ENCODE measurements at regions of chr7 and their contacts with region 1.

Region 1: GRCh38 chr7:98266840-98267239 is 14.6 kb upstream of the BRI3 start:
- DNase-seq: no peak
- H3K4me3 ChIP-seq: no peak overlapping the region
- H3K4me3 Mint-ChIP-seq: no peak overlapping the region
- H3K27ac Mint-ChIP-seq: no peak overlapping the region
- H3K4me1 ChIP-seq: peaks cover 17% of the 10 kb centered on the region
- H3K4me1 Mint-ChIP-seq: peaks cover 15% of the 10 kb centered on the region
- H3K27me3 ChIP-seq: no peaks in the 10 kb centered on the region
- H3K27me3 Mint-ChIP-seq: no peaks in the 10 kb centered on the region
- CTCF ChIP-seq: peak; percentile 37 to 52

Region 2: DNA sequence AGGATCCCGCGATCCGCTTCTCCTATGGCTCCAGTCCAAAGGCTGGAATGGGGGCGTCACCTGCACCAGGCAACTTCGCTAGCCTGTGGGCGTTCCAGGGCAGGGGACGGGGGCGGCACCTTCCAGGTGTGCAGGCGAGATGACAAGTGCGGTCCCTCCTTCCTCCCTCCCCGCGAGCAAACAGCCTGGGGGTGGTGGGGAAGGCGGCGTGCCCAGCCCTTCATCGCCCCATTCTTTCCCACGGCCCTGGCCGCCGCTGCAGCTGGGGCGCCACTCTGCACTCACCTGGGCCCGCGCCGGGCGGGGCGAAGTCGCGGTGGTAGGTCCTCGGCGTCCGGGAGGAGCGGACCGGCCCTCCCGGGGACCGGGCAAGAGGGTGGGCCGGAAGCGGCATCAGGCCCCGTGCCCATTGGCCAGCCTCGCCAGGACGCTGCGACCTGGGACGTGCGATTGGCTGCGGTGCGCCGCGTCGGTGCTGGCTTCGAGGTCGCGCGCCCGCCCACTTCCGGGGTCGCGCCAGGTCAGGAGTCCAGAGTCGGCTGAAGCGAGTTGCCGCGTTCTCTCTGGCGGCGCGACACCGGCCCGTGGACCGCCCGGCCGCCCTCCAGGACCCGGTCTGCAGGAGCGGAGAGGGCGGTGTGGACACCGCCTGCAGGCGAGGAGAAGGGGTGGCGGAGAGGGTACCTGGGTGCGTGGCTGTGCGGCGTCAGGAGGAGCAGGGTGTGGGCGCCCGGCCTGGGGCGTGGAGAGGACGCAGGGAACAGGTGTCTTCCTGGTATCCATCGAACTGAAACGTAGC is 14.8 kb before region 1 on chr7 and contains the start of gene TECPR1:
- CTCF ChIA-PET with region 1: interaction called, 10 read pairs
- POLR2A ChIA-PET with region 1: no interaction called
- intact Hi-C with region 1: no loop called
- DNase-seq: peak; percentile 96 to 98
- H3K4me3 ChIP-seq: peak within 1 kb of the TSS; percentile 68
- H3K4me3 Mint-ChIP-seq: peak within 1 kb of the TSS; percentile 91
- H3K27ac Mint-ChIP-seq: peak within 1 kb of the TSS; percentile 85
- H3K4me1 ChIP-seq: peaks cover 8% of the 10 kb centered on the region; the same call in 1 of the 2 replicates
- H3K4me1 Mint-ChIP-seq: peaks cover 9% of the 10 kb centered on the region
- H3K27me3 ChIP-seq: no peaks in the 10 kb centered on the region
- H3K27me3 Mint-ChIP-seq: no peaks in the 10 kb centered on the region
- CTCF ChIP-seq: no peak
- total RNA-seq, gene TECPR1: 19.0 and 26.4 TPM in 2 replicates

Region 3: GRCh38 chr7:98280791-98281756 is 14.2 kb after region 1 on chr7 and contains the start of gene BRI3:
- CTCF ChIA-PET with region 1: interaction called, 3 read pairs
- POLR2A ChIA-PET with region 1: interaction called, 5 read pairs
- intact Hi-C with region 1: loop called (anchors 1 kb)
- DNase-seq: peak; percentile 89 to 94
- H3K4me3 ChIP-seq: peak within 1 kb of the TSS; percentile 81
- H3K4me3 Mint-ChIP-seq: peak within 1 kb of the TSS; percentile 97
- H3K27ac Mint-ChIP-seq: peak within 1 kb of the TSS; percentile 91
- H3K4me1 ChIP-seq: peaks cover 44% of the 10 kb centered on the region
- H3K4me1 Mint-ChIP-seq: peaks cover 43% of the 10 kb centered on the region
- H3K27me3 ChIP-seq: no peaks in the 10 kb centered on the region
- H3K27me3 Mint-ChIP-seq: no peaks in the 10 kb centered on the region
- CTCF ChIP-seq: no peak
- total RNA-seq, gene BRI3: 197 and 224 TPM in 2 replicates

Measured in Caco-2 (cell line).